AG04449 (cell line): ENCODE measurements at regions of chr17 and their contacts with region 1.

Region 1: DNA sequence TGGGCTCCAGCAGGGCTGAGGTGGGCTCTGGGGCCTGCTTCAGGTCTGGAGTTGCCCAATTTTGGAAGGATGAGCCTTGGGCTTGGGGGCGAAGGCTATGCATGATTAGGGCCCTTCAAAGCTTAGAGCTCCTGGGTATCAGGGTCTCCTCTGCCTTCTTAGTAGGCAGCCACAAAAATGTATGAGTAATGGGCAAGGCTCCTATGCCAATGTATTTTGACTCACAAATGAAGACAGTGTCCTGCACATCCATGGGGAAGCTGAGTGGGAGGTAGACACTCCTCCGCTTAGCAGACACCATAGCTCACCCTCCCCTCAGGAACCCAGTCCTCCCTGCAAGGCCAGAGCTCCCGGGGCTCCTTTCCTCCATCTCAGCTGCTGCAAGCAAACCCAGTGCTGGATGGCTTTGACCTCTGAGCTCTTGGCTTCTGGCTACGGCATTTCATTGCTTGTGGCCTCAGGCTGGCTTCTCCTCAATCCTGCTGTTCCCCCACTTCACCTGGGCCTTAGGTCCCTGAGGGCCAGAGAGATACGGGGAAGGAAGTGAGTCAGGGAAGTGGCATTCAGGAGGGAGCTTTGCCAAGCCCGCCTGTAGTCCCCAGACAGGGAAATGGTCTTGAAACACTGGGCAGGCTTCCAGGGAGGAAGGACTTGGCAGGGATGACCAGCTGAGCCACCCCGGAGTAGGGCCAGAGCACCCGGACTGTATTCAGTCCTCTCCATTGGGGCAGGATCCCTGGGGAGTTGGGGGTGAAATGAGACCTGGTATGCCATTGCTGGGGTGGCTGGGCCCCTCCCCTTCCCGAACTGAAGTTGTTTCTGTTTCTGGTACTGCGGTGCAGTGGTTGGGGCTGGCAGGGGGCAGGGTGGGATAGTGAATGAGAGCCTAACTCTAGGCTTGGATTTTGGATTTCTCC is 4.4 kb downstream of the ABCC3 start:
- DNase-seq: peak; percentile 87
- H3K4me3 ChIP-seq: no peak overlapping the region
- CTCF ChIP-seq: no peak

Region 2: DNA sequence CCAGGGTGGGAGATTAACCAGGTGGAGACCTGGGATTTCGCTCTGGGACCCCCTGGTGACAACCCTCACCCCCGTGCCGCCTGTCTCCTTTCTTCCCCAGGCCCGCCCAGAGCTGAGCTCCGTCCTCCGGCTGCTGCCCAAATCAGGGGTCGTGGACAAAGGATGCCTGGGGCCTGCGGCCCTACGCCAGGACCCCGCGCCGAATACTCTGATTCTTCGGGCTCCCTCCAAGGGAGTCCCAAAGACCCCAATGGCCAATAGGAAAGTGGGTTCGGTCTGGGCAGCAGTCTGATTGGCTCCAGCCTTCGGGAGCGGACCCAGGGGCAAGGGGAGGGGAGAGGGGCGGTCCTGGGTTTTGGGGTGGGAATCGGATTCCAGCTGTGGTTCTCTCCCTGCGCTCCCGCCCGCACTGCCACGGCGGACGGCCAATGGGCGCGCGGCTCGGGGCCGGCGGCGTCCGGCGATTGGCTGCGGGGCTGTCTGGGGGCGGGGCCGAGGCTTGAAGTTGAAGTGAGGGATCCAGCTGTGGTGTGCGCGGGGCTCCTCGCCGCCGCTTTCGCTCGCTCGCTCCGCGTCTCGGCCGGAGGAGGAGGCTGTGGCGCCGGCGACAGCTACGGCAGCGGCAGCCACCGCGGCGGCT is 78.8 kb before region 1 on chr17 and contains the start of gene CACNA1G:
- CTCF ChIA-PET with region 1: no interaction called
- POLR2A ChIA-PET with region 1: no interaction called
- DNase-seq: no peak
- H3K4me3 ChIP-seq: peak within 1 kb of the TSS; percentile 49
- CTCF ChIP-seq: no peak

Region 3: DNA sequence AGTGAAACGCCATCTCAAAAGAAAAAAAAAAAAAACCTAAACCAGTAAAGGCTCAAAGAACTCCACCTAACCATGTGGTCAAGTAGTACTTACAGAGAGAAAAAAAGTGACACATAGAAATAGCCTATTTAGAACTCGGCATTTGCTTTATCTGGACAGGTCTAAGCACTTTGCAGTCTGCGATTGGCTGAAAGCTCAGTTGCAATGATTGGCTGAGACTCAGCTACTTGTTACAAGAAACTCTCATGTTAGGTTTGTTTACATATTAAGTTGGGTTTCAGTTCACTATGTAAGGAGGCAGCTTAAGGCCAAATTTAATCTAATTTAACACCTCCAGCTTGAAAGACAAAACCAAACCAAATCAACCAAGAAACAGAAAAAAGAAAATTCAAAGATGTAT is 14.6 kb after region 1 on chr17:
- CTCF ChIA-PET with region 1: interaction called, 21 read pairs
- POLR2A ChIA-PET with region 1: interaction called, 3 read pairs
- DNase-seq: no peak
- H3K4me3 ChIP-seq: no peak overlapping the region
- CTCF ChIP-seq: no peak

Region 4: DNA sequence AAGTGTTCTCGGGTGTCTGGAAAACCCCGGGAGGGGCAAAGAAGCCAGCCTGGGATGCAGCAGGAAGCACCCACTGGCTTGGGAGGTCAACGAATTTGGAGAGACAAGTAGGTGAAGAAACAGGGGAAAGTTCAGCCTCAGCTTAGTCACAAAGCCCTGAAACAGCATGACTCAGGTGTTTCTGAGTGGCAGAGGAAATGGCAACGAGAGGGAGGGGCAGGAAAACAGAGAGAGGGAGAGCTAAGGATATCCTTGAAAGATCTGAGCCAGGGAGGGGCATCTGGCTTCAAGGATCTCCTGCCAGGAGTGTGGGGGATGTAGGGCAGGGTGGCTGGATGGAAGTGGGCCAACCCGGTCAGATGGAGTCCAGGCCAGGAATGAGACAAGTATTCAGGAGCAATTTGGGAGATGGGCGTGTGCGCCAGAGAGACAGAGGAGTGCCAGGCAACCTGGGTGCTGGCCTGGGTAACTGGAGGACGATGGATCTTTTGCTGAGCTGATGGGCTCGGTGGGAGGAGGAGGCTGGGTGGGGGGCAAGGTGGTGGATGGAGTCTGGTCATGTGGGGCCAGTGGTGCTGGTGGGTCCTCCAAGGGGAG is 22.8 kb after region 1 on chr17:
- CTCF ChIA-PET with region 1: interaction called, 16 read pairs
- POLR2A ChIA-PET with region 1: interaction called, 20 read pairs
- DNase-seq: peak; percentile 52
- H3K4me3 ChIP-seq: no peak overlapping the region
- CTCF ChIP-seq: no peak